ENCODE measurements at regions of chr14 and their contacts with region 1.

Region 1: DNA sequence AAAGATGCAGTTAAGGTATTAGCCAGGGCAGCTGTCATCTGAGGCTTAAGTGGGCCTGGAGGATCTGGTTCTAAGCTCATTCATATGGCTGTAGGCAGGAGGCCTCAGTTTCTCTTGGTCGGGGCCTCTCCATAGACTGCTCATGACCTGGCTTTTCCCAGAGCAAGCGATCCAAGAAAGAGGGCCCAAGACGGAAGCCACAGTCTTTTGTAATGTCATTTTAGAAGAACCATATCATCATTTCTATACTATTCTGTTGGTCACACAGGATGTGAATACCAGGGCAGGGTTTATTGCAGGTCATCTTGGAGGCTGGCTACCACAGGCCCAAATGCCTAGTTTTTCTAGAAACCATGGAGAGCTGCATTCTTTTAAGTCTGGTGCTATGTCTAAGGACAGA is 47.7 kb downstream of the GNG2 start:
- DNase-seq: no peak
- ATAC-seq: no peak
- H3K4me3 ChIP-seq: no peak overlapping the region
- H3K4me3 Mint-ChIP-seq: no peak overlapping the region
- H3K27ac ChIP-seq: no peak overlapping the region
- H3K27ac Mint-ChIP-seq: peak overlapping the region in 1 of 9 donors; percentile 15
- H3K4me1 ChIP-seq: peaks cover 20 to 21% of the 10 kb centered on the region in 2 donors
- H3K4me1 Mint-ChIP-seq: peaks cover 42 to 84% (median 67%) of the 10 kb centered on the region in 7 donors
- H3K27me3 ChIP-seq: no peaks in the 10 kb centered on the region
- H3K27me3 Mint-ChIP-seq: no peaks in the 10 kb centered on the region

Region 2: GRCh38 chr14:51873221-51873893 is 34.7 kb before region 1 on chr14:
- CTCF ChIA-PET with region 1: interaction called, 4 read pairs
- POLR2A ChIA-PET with region 1: no interaction called
- intact Hi-C with region 1: loop called in 1 of 2 experiments (anchors 1 kb)
- DNase-seq: peak in 2 of 9 donors; percentile 38 to 50
- ATAC-seq: peak; percentile 76
- H3K4me3 ChIP-seq: no peak overlapping the region
- H3K4me3 Mint-ChIP-seq: peak overlapping the region in 6 of 10 donors; percentile 1 to 70 (median 28)
- H3K27ac ChIP-seq: no peak overlapping the region
- H3K27ac Mint-ChIP-seq: peak overlapping the region; percentile 24 to 84 (median 69)
- H3K4me1 ChIP-seq: peaks cover 31 to 68% of the 10 kb centered on the region in 2 donors
- H3K4me1 Mint-ChIP-seq: peaks cover 34 to 64% (median 56%) of the 10 kb centered on the region in 7 donors
- H3K27me3 ChIP-seq: no peaks in the 10 kb centered on the region
- H3K27me3 Mint-ChIP-seq: no peaks in the 10 kb centered on the region

Region 3: GRCh38 chr14:51922624-51923023 is 14.5 kb after region 1 on chr14:
- CTCF ChIA-PET with region 1: interaction called, 6 read pairs
- POLR2A ChIA-PET with region 1: no interaction called
- intact Hi-C with region 1: loop called in 1 of 2 experiments (anchors 2 kb)
- DNase-seq: no peak
- ATAC-seq: peak; percentile 29
- H3K4me3 ChIP-seq: no peak overlapping the region
- H3K4me3 Mint-ChIP-seq: peak overlapping the region in 6 of 10 donors; percentile 1 to 39 (median 36)
- H3K27ac ChIP-seq: no peak overlapping the region
- H3K27ac Mint-ChIP-seq: peak overlapping the region in 8 of 9 donors; percentile 5 to 81 (median 65)
- H3K4me1 ChIP-seq: peaks cover 5 to 17% of the 10 kb centered on the region in 2 donors
- H3K4me1 Mint-ChIP-seq: peaks cover 22 to 80% (median 71%) of the 10 kb centered on the region in 7 donors
- H3K27me3 ChIP-seq: no peaks in the 10 kb centered on the region
- H3K27me3 Mint-ChIP-seq: no peaks in the 10 kb centered on the region

Region 4: DNA sequence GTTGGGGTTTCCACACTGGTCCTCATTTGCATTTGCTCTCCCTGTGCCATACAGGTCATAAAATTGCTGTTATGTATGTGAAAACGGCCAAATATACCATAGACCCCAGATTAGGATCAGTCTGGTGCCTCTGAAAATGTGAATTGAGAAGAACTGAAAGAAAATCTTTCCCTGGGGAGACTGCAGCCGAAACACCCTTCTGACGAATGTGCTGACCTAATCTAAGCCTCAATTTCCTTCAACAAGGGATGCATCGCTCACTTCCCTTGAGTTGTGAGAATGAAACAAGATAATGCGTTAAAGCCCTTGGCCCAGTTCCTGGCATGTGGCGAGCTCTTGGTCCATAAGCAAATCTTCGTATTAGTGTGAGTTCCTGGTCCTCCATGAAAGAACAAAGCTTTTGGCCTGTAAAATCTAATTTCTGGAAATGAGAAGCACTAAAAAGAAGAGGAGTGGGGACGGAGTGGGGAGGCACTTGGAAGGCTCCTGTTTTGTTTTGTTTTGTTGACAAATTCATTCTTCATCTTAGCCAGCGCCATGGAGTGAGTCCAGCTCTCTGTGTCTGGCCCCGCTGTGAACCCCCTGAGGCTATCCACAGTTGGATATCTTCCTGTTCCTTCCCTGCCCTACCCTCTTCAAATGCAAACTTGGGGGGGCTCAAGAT is 31.8 kb after region 1 on chr14:
- CTCF ChIA-PET with region 1: no interaction called
- POLR2A ChIA-PET with region 1: no interaction called
- intact Hi-C with region 1: no loop called
- DNase-seq: no peak
- ATAC-seq: no peak
- H3K4me3 ChIP-seq: no peak overlapping the region
- H3K4me3 Mint-ChIP-seq: no peak overlapping the region
- H3K27ac ChIP-seq: no peak overlapping the region
- H3K27ac Mint-ChIP-seq: peak overlapping the region in 6 of 9 donors; percentile 24 to 81 (median 62)
- H3K4me1 ChIP-seq: no peaks in the 10 kb centered on the region
- H3K4me1 Mint-ChIP-seq: peaks cover 21 to 60% (median 41%) of the 10 kb centered on the region in 7 donors
- H3K27me3 ChIP-seq: no peaks in the 10 kb centered on the region
- H3K27me3 Mint-ChIP-seq: no peaks in the 10 kb centered on the region

Measured in naive thymus-derived CD4-positive, alpha-beta T cell (primary cell).